CD8-positive, alpha-beta T cell (primary cell): ENCODE measurements at regions of chr1 and their contacts with region 1.

Region 1: GRCh38 chr1:23184212-23184934 is 15.7 kb upstream of the LUZP1 start:
- DNase-seq: peak in 8 of 9 experiments; percentile 17 to 75 (median 43)
- ATAC-seq: peak; percentile 48
- H3K4me3 ChIP-seq: peak overlapping the region in 1 of 2 experiments; percentile 3
- H3K4me3 Mint-ChIP-seq: peak overlapping the region; percentile 74
- H3K27ac ChIP-seq: no peak overlapping the region
- H3K27ac Mint-ChIP-seq: no peak overlapping the region
- H3K4me1 ChIP-seq: no peaks in the 10 kb centered on the region
- H3K4me1 Mint-ChIP-seq: peaks cover 8% of the 10 kb centered on the region
- H3K27me3 ChIP-seq: no peaks in the 10 kb centered on the region
- H3K27me3 Mint-ChIP-seq: peaks cover 4% of the 10 kb centered on the region
- CTCF ChIP-seq: peak; percentile 94

Region 2: DNA sequence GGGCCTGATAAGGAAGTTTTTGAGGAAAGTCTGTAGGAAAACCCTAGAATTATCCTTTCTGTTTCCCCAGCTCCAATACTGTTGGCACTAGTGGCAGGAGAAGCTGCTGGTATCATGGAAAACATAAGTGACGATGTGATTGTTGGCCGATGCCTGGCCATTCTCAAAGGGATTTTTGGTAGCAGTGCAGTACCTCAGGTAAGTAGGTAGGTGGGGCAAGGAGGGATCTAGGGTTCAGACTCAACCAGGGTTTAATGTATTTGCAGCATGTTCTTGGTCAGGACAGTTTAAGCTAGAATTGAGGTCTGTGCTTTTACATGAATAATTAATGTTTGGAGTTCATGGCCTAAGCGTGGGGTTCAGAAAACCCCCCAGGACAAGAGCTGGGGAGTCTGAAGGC is 103.0 kb before region 1 on chr1:
- CTCF ChIA-PET with region 1: interaction called, 662 read pairs
- POLR2A ChIA-PET with region 1: no interaction called
- intact Hi-C with region 1: no loop called
- DNase-seq: peak in 1 of 9 experiments; percentile 17
- ATAC-seq: peak; percentile 63
- H3K4me3 ChIP-seq: no peak overlapping the region
- H3K4me3 Mint-ChIP-seq: no peak overlapping the region
- H3K27ac ChIP-seq: no peak overlapping the region
- H3K27ac Mint-ChIP-seq: no peak overlapping the region
- H3K4me1 ChIP-seq: no peaks in the 10 kb centered on the region
- H3K4me1 Mint-ChIP-seq: no peaks in the 10 kb centered on the region
- H3K27me3 ChIP-seq: no peaks in the 10 kb centered on the region
- H3K27me3 Mint-ChIP-seq: no peaks in the 10 kb centered on the region
- CTCF ChIP-seq: no peak

Region 3: GRCh38 chr1:23122023-23122748 is 62.2 kb before region 1 on chr1:
- CTCF ChIA-PET with region 1: interaction called, 20 read pairs
- POLR2A ChIA-PET with region 1: no interaction called
- intact Hi-C with region 1: no loop called
- DNase-seq: no peak
- ATAC-seq: no peak
- H3K4me3 ChIP-seq: no peak overlapping the region
- H3K4me3 Mint-ChIP-seq: no peak overlapping the region
- H3K27ac ChIP-seq: no peak overlapping the region
- H3K27ac Mint-ChIP-seq: no peak overlapping the region
- H3K4me1 ChIP-seq: peaks cover 19% of the 10 kb centered on the region
- H3K4me1 Mint-ChIP-seq: peaks cover 54% of the 10 kb centered on the region
- H3K27me3 ChIP-seq: no peaks in the 10 kb centered on the region
- H3K27me3 Mint-ChIP-seq: no peaks in the 10 kb centered on the region
- CTCF ChIP-seq: no peak

Region 4: DNA sequence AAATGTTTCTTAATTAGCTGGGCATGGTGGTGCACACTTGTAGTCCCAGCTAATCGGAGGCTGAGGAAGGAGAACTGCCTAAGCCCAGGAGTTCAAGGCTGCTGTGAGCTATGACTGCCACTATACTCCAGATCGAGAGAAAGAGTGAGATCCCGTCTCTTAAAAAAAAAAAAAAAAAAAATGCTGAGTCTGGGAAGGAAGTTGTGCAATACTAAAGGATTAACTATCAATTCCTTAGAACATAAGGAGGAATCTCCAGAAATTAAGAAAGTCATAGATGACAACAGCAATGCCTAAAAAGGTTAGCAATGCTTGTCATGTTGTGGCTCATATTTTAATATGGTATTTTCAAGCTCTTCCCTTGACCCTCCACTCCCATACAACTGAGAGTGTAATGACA is 21.0 kb before region 1 on chr1:
- CTCF ChIA-PET with region 1: interaction called, 39 read pairs
- POLR2A ChIA-PET with region 1: interaction called, 4 read pairs
- intact Hi-C with region 1: no loop called
- DNase-seq: no peak
- ATAC-seq: no peak
- H3K4me3 ChIP-seq: no peak overlapping the region
- H3K4me3 Mint-ChIP-seq: no peak overlapping the region
- H3K27ac ChIP-seq: no peak overlapping the region
- H3K27ac Mint-ChIP-seq: no peak overlapping the region
- H3K4me1 ChIP-seq: peaks cover 7% of the 10 kb centered on the region
- H3K4me1 Mint-ChIP-seq: peaks cover 43% of the 10 kb centered on the region
- H3K27me3 ChIP-seq: no peaks in the 10 kb centered on the region
- H3K27me3 Mint-ChIP-seq: no peaks in the 10 kb centered on the region
- CTCF ChIP-seq: no peak

Region 5: GRCh38 chr1:23196639-23197328 is 12.4 kb after region 1 on chr1:
- CTCF ChIA-PET with region 1: interaction called, 43 read pairs
- POLR2A ChIA-PET with region 1: no interaction called
- intact Hi-C with region 1: no loop called
- DNase-seq: no peak
- ATAC-seq: no peak
- H3K4me3 ChIP-seq: no peak overlapping the region
- H3K4me3 Mint-ChIP-seq: no peak overlapping the region
- H3K27ac ChIP-seq: no peak overlapping the region
- H3K27ac Mint-ChIP-seq: no peak overlapping the region
- H3K4me1 ChIP-seq: no peaks in the 10 kb centered on the region
- H3K4me1 Mint-ChIP-seq: no peaks in the 10 kb centered on the region
- H3K27me3 ChIP-seq: no peaks in the 10 kb centered on the region
- H3K27me3 Mint-ChIP-seq: peaks cover 29% of the 10 kb centered on the region
- CTCF ChIP-seq: no peak

Region 6: DNA sequence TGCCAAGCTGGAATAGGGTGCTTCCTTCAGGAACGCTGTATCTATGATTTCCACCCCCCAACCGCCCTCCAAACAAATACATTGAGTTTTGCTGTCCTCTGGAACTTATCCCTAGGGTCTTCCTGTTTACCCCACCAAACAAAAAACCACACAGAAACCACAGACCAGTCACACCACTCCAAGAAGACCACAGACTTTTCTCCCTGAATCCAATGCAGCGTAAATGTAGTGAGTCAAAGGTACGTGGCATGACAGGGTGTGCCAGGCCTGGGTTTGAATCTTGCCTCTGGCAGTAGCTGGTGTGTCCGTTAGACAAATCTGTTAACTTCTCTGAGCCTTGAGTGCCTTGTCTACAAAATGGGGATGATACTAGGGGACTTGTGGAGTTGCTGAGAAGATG is 271.9 kb after region 1 on chr1:
- CTCF ChIA-PET with region 1: no interaction called
- POLR2A ChIA-PET with region 1: no interaction called
- intact Hi-C with region 1: no loop called
- DNase-seq: no peak
- ATAC-seq: no peak
- H3K4me3 ChIP-seq: no peak overlapping the region
- H3K4me3 Mint-ChIP-seq: no peak overlapping the region
- H3K27ac ChIP-seq: no peak overlapping the region
- H3K27ac Mint-ChIP-seq: no peak overlapping the region
- H3K4me1 ChIP-seq: peaks cover 14% of the 10 kb centered on the region
- H3K4me1 Mint-ChIP-seq: peaks cover 25% of the 10 kb centered on the region
- H3K27me3 ChIP-seq: peaks cover 0 to 10% of the 10 kb centered on the region in 2 experiments
- H3K27me3 Mint-ChIP-seq: peaks cover 13% of the 10 kb centered on the region
- CTCF ChIP-seq: no peak